Endothelial cell of umbilical vein (primary cell): ENCODE measurements at regions of chr1 and their contacts with region 1.

Region 1: GRCh38 chr1:33455539-33456501 is 16.6 kb upstream of the ZSCAN20 start:
- DNase-seq: peak; percentile 67
- H3K4me3 ChIP-seq: no peak overlapping the region
- H3K27ac ChIP-seq: no peak overlapping the region
- H3K4me1 ChIP-seq: peaks cover 10% of the 10 kb centered on the region
- H3K27me3 ChIP-seq: no peaks in the 10 kb centered on the region
- CTCF ChIP-seq: peak; percentile 68 to 69
- POLR2A ChIP-seq: no peak

Region 2: DNA sequence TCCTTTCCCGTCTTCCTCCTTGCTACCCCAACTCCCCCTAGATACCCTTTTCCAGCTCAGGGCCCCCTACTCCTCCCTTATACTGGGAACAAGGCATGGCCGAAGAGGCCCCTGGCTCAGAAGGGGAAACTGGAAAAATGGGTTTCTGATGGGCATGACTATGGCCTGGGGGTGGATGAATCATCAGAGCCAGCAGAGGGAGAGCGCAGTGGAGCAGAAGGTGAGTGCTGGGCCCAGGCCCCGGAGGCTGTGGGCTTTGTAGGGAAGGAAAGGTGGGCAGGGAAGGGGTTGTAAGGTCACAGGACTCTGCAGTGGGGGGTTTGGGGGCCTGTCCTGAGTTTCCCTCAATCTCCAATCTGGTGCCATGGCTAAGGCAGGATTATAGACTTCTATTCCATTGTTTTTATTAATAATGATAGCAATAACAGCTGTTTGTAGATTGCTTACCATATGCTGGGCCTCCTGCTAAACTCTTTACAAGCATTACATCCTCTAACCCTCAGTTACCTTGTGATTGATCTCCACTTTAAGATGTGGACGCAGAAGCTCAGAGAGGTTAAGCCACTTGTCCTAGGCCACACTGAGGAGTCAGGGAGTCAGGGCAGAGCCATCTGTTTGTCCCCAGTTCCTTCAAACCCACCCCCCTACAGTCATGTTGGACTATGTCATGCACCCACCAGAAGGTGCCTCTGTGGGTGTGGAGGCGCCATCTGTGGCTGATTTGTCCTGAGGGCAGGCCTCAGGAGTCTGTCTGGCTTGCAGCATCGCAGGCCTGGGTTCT is 235.7 kb before region 1 on chr1:
- CTCF ChIA-PET with region 1: interaction called, 4 read pairs
- POLR2A ChIA-PET with region 1: no interaction called
- dilution Hi-C with region 1: no loop called
- intact Hi-C with region 1: loop called (anchors 1 kb)
- DNase-seq: no peak
- H3K4me3 ChIP-seq: no peak overlapping the region
- H3K27ac ChIP-seq: no peak overlapping the region
- H3K4me1 ChIP-seq: peaks cover 5% of the 10 kb centered on the region
- H3K27me3 ChIP-seq: peaks cover 3 to 12% of the 10 kb centered on the region in 2 experiments
- CTCF ChIP-seq: no peak
- POLR2A ChIP-seq: no peak

Region 3: DNA sequence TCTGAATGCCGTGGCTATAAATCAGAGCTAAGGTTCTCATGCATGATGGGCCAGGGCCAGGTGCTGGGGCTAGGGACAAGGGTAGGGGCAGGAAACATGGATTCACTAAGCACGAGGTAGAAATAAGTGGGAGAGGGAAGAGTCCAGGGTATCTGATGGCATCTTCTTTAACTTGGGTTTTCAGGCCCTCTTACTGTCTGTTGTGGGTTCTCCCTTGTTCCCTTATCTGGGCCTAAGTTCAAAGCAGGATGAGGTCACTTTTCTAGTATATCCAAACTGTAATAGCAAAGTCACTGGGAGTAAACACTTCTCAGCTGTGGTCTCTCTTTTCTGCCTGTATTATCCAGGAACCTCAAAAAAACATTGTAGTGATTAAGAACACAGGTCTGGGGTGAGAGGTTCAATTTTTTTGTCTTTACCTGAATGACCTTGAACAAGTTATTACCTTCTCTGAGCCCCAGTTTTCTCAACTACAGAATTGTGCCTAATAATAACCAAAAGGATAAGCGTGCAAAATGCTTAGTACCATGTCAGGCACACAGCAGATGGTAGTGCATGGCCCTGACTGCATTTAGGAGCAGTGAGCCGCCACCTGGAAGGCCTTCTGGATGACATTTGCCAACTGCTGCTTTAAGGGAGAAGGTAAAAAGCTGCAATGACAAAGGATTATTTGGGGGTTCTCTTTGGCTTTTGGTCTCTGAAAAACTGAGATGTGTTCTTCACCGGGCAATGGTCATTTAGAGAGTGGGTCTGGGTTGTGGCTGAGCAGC is 81.3 kb before region 1 on chr1:
- CTCF ChIA-PET with region 1: interaction called, 26 read pairs
- POLR2A ChIA-PET with region 1: no interaction called
- dilution Hi-C with region 1: no loop called
- intact Hi-C with region 1: loop called (anchors 5 kb)
- DNase-seq: no peak
- H3K4me3 ChIP-seq: no peak overlapping the region
- H3K27ac ChIP-seq: no peak overlapping the region
- H3K4me1 ChIP-seq: no peaks in the 10 kb centered on the region
- H3K27me3 ChIP-seq: no peaks in the 10 kb centered on the region
- CTCF ChIP-seq: no peak
- POLR2A ChIP-seq: no peak

Region 4: DNA sequence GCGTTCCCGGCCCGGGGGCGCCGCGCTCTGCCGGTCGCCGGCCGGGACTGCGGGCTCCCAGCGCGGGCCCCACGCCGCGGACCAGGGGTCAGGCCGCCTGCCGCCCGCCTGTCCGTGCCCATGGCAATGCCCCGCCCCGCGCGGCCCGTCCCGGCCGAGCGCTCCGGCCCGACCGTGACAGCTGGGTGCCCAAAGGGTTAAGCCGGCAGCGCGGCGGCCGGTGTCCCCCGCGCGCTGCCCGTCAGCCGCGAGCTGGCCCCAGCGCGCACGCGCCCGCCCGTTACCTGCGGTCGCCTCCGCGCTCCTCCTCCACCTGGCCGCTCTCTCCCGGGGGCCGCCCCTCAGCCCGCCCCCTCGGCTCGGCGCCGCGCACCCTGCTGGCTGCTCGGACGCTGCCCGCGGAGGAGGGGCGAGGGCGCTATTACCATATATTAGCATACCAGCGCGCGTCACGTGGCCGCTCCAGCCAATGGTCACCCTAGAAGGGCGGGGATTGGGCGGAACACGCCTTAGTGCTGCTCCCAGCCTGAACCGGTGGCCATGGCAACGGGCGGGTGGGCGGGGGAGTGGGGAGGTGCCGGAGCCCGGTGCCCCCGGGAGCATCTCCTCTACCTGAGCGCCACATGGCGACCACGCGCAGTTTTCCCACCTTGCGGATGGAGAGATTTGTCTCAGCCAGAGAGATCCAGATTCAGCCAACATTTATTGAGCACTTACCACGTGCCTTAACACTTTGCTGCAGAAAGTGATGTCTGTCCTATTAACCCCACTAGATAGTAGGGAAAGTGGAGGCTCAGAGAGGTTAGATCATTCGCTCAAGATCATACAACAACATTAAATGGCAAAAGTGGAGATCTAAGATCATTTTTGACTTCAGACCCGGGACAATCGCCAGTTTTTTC is 24.9 kb before region 1 on chr1 and contains the start of gene PHC2:
- CTCF ChIA-PET with region 1: interaction called, 10 read pairs
- POLR2A ChIA-PET with region 1: no interaction called
- dilution Hi-C with region 1: no loop called
- intact Hi-C with region 1: loop called (anchors 1 kb)
- DNase-seq: peak; percentile 96
- H3K4me3 ChIP-seq: peak within 1 kb of the TSS; percentile 36 to 66 (median 55)
- H3K27ac ChIP-seq: peak within 1 kb of the TSS; percentile 2
- H3K4me1 ChIP-seq: peaks cover 30% of the 10 kb centered on the region
- H3K27me3 ChIP-seq: no peaks in the 10 kb centered on the region
- CTCF ChIP-seq: peak in 1 of 2 donors; percentile 22
- POLR2A ChIP-seq: no peak
- total RNA-seq, gene PHC2: 79.0 and 82.3 TPM in 2 replicates

Region 5: GRCh38 chr1:33575324-33575879 is 119.6 kb after region 1 on chr1:
- CTCF ChIA-PET with region 1: no interaction called
- POLR2A ChIA-PET with region 1: no interaction called
- dilution Hi-C with region 1: no loop called
- intact Hi-C with region 1: no loop called
- DNase-seq: no peak
- H3K4me3 ChIP-seq: no peak overlapping the region
- H3K27ac ChIP-seq: no peak overlapping the region
- H3K4me1 ChIP-seq: no peaks in the 10 kb centered on the region
- H3K27me3 ChIP-seq: no peaks in the 10 kb centered on the region
- CTCF ChIP-seq: no peak
- POLR2A ChIP-seq: no peak

Region 6: GRCh38 chr1:33719771-33720670 is 264.2 kb after region 1 on chr1:
- CTCF ChIA-PET with region 1: no interaction called
- POLR2A ChIA-PET with region 1: no interaction called
- dilution Hi-C with region 1: no loop called
- intact Hi-C with region 1: no loop called
- DNase-seq: no peak
- H3K4me3 ChIP-seq: no peak overlapping the region
- H3K27ac ChIP-seq: no peak overlapping the region
- H3K4me1 ChIP-seq: no peaks in the 10 kb centered on the region
- H3K27me3 ChIP-seq: no peaks in the 10 kb centered on the region
- CTCF ChIP-seq: no peak
- POLR2A ChIP-seq: no peak